ENCODE measurements at regions of chr7 and their contacts with region 1.

Region 1: GRCh38 chr7:138981332-138982203 is at the start of gene KIAA1549:
- DNase-seq: peak in 1 of 2 experiments; percentile 83
- H3K4me3 ChIP-seq: peak within 1 kb of the TSS; percentile 57 to 86 (median 78)
- H3K27ac ChIP-seq: peak within 1 kb of the TSS; percentile 41; the same call in 1 of the 2 replicates
- H3K4me1 ChIP-seq: peaks cover 4 to 15% (median 11%) of the 10 kb centered on the region in 4 experiments; a peak in 6 of 7 replicates
- H3K27me3 ChIP-seq: peaks cover 0 to 19% (median 8%) of the 10 kb centered on the region in 4 experiments; a peak in 4 of 7 replicates
- CTCF ChIP-seq: peak; percentile 41 to 67 (median 43)
- EP300 ChIP-seq: no peak
- POLR2A ChIP-seq: peak in 1 of 2 experiments; percentile 18; a peak in 2 of 3 replicates
- RAD21 ChIP-seq: peak in 1 of 2 experiments; percentile 48; a peak in 2 of 4 replicates
- total RNA-seq, gene KIAA1549: 17.3 and 17.6 TPM in 2 replicates

Region 2: DNA sequence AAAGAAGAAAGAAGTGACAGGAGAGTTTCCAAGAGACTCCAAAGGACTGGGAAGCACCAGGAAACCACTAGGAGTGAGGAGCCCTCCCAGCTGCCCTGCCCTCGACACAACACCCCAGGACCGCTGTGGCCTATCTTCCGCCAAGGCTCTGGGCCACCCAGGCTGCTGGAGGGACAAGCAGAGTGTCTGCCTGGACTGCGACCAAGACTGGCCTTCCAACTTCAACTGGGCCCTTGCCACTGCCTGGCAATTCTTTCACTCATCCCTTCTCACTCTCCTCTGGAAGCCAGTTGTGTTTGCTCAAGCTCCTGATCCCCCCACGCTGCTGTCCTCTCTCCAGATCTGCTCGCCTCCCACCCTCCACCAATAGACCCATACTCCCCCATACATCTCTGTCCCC is 10.6 kb before region 1 on chr7:
- CTCF ChIA-PET with region 1: interaction called, 8 read pairs
- POLR2A ChIA-PET with region 1: interaction called, 14 read pairs
- DNase-seq: no peak
- H3K4me3 ChIP-seq: no peak overlapping the region
- H3K27ac ChIP-seq: no peak overlapping the region
- H3K4me1 ChIP-seq: peaks cover 5 to 24% (median 12%) of the 10 kb centered on the region in 4 experiments
- H3K27me3 ChIP-seq: no peaks in the 10 kb centered on the region; a peak in 1 of 7 replicates
- CTCF ChIP-seq: no peak
- EP300 ChIP-seq: no peak
- POLR2A ChIP-seq: no peak
- RAD21 ChIP-seq: no peak

Region 3: DNA sequence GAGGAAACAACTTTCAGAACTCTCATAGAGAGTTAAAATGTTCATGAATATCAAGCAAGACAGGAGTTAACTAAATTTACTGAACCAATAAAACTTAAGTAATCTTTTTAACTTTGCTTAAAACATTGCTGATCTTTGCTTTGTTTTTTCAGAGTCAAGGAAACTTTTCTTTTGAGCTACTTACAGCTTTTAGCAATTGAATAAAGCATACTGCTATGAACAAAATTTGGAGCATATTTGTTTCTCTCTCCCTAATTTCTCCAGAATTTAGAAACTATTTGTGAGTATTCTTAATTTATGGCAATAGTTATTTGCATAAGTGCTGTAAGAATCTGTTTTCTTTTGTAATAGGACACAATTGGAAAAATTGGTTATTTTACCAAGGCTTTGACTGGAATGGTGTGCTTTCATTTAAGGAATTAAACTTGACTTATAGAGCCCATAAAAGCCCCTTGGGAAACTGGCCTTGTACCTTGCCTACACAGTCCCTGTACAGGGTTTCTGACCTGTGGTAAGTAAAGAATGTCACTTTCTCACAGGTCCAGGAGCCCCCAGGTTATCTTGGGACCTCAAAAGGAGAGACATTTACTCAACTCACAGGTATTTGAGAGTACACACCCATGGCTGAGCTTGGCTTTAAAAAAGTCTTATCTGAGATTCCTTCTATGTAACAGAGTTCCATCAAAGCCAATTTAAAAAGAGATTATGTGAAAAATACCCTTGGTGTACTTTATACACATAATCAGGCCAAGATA is 22.9 kb after region 1 on chr7:
- CTCF ChIA-PET with region 1: no interaction called
- POLR2A ChIA-PET with region 1: no interaction called
- DNase-seq: peak in 1 of 2 experiments; percentile 22
- H3K4me3 ChIP-seq: no peak overlapping the region
- H3K27ac ChIP-seq: no peak overlapping the region
- H3K4me1 ChIP-seq: no peaks in the 10 kb centered on the region
- H3K27me3 ChIP-seq: no peaks in the 10 kb centered on the region
- CTCF ChIP-seq: no peak
- EP300 ChIP-seq: no peak
- POLR2A ChIP-seq: no peak
- RAD21 ChIP-seq: no peak

Measured in H1 (cell line).